ENCODE measurements at regions of chr2 and their contacts with region 1.

Region 1: GRCh38 chr2:196076778-196077568 is 8.3 kb upstream of the DNAH7 start:
- DNase-seq: no peak
- H3K4me3 ChIP-seq: no peak overlapping the region
- H3K27ac ChIP-seq: peak overlapping the region in 1 of 2 experiments; percentile 64; a peak in 1 of 4 replicates
- H3K4me1 ChIP-seq: no peaks in the 10 kb centered on the region
- H3K27me3 ChIP-seq: no peaks in the 10 kb centered on the region
- CTCF ChIP-seq: no peak
- EP300 ChIP-seq: no peak
- RAD21 ChIP-seq: no peak

Region 2: DNA sequence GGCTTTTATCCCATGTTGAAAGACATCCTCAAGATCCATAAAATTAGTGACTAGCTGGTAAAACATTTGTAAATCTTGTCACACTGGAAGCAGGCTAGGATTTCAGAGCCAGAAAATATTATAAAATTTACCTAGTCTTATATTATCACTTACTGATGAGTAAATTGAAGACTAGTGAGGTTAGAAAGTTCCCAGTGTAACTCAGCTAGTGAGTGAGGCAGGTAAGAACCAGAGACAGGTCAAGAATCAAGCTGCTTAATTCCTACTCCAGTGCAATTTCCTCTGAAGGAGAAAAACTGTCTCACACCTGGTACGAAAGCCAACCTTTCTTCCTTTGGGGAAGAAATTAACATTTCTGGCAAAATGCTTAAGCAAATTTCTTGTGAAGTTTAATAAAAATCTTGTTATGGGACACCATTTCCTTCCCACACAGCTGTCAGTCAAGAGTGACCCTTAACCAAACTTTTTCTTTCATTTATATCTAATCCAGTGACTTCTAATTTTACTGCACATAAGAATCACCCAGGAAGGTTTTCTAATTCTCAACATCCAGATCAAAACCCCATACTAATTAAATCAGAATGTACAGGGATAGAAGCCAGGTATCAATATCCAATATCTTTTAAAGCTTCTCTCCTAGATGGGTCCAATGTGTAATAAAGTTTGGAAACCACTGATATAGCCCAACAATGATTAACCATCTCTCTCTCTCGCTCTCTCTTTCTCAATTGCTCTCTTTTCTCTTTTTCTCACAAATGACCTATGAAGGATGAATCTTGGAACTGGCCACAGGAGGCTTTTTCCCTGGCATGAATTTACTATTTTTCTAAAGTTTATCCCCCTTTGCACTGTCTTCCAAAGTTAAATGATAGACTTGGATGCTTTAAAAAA is 684.3 kb before region 1 on chr2:
- CTCF ChIA-PET with region 1: no interaction called
- POLR2A ChIA-PET with region 1: no interaction called
- DNase-seq: no peak
- H3K4me3 ChIP-seq: no peak overlapping the region
- H3K27ac ChIP-seq: no peak overlapping the region; a peak in 1 of 4 replicates
- H3K4me1 ChIP-seq: no peaks in the 10 kb centered on the region; a peak in 1 of 4 replicates
- H3K27me3 ChIP-seq: no peaks in the 10 kb centered on the region
- CTCF ChIP-seq: no peak
- EP300 ChIP-seq: no peak
- RAD21 ChIP-seq: no peak

Region 3: DNA sequence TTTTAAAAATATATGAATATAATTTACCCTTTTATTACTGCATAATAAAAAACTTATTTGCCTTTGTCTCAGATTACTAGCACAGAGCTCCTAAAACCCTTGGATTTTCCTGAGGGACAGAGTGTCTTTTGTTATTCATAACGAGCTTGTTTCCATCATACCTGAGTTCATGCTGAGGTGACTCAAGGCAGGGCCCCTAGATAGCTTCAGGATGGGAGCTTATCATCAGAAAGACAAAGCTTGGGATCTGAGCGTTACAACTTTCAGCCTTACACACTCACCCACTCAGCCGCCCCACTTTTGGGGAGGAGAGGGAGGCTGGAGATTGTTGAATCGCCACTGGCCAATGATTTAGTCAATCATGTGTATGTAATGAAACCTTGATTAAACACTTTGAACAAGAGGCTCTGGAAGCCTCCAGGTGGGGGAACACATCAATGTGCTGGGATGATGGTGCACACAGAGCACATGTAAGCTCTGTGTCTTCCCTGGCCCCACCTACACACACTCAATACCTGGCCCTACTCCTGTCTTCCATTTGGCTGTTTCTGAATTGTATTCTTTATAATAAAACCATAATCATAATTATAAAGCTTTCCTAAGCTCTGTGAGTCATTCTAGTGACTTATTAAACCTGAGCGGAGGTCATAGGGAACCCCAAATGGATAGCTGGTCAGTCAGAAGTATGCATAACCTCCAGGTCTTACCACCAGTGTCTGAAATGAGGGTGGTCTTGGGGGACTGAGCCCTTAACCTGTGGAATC is 20.2 kb after region 1 on chr2:
- CTCF ChIA-PET with region 1: interaction called, 17 read pairs
- POLR2A ChIA-PET with region 1: no interaction called
- DNase-seq: no peak
- H3K4me3 ChIP-seq: no peak overlapping the region
- H3K27ac ChIP-seq: no peak overlapping the region
- H3K4me1 ChIP-seq: no peaks in the 10 kb centered on the region; a peak in 1 of 4 replicates
- H3K27me3 ChIP-seq: no peaks in the 10 kb centered on the region
- CTCF ChIP-seq: no peak
- EP300 ChIP-seq: no peak
- RAD21 ChIP-seq: no peak

Region 4: DNA sequence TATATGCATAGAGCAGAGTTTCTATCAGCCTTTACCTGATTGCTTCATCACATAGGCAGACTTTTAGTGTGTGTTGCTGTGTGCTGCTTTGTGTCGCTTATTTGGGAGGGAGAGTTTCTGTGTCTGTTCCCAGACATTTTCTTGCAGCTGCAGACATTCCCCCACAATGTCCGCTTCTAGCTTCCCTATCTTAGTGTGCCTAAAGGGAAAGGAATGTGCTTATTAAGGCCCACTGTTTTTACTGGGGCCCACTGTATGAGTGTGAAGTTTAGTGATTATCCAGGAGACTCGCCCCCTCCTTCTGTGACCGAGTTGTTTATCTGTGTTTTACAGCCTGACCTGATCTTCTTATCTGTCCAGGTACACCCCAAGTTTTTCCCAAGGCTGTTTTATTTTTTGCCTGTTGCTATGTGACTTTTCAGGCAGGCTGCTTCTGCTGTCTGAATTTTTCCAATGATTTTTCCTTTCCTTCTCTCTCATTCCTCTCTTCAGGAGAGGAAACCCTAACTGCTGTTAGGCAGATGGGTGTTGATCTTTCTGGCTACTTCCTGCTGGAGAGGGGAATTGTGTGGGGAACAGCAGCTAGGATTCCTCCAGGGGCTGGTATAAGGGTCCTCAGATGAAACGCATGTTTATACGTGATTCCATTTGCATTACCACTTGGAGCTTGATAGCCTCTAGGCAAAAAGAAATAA is 46.9 kb after region 1 on chr2:
- CTCF ChIA-PET with region 1: interaction called, 12 read pairs
- POLR2A ChIA-PET with region 1: no interaction called
- DNase-seq: no peak
- H3K4me3 ChIP-seq: no peak overlapping the region
- H3K27ac ChIP-seq: peak overlapping the region in 1 of 2 experiments; percentile 50; a peak in 2 of 4 replicates
- H3K4me1 ChIP-seq: no peaks in the 10 kb centered on the region
- H3K27me3 ChIP-seq: no peaks in the 10 kb centered on the region
- CTCF ChIP-seq: no peak
- EP300 ChIP-seq: no peak
- RAD21 ChIP-seq: no peak

Region 5: DNA sequence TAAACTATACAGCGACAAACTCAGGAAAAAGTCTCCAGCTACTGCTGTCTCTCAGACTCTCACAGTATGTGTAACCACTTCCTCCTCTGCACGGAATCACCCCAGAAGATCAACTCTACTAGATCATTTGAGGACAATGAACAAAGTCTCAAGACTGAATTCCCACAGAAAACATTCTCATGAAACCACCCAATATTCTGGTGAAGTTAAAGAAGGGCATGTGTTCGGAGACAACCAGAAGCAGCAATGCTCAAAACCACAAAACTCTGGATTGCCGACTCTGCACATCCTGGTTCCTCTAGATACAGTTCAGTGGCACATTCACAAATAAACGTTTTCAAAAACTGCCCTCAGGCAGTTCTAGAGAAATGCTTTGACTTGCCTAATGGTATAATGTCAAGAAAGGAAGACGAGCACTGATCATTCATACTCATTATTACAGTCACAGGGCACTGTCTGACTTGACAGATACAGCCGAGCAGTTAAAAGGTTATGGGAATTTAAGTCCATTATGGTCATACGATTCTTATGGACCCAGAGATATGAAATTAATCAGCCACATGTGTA is 186.3 kb after region 1 on chr2:
- CTCF ChIA-PET with region 1: interaction called, 15 read pairs
- POLR2A ChIA-PET with region 1: no interaction called
- DNase-seq: no peak
- H3K4me3 ChIP-seq: no peak overlapping the region
- H3K27ac ChIP-seq: peak overlapping the region; percentile 60 to 99
- H3K4me1 ChIP-seq: peaks cover 19 to 58% of the 10 kb centered on the region in 2 experiments
- H3K27me3 ChIP-seq: no peaks in the 10 kb centered on the region
- CTCF ChIP-seq: no peak
- EP300 ChIP-seq: 0 out of 4 replicates have a peak, but pooled peaks of 1 of the 2 experiments have one; percentile 4
- RAD21 ChIP-seq: no peak

Region 6: DNA sequence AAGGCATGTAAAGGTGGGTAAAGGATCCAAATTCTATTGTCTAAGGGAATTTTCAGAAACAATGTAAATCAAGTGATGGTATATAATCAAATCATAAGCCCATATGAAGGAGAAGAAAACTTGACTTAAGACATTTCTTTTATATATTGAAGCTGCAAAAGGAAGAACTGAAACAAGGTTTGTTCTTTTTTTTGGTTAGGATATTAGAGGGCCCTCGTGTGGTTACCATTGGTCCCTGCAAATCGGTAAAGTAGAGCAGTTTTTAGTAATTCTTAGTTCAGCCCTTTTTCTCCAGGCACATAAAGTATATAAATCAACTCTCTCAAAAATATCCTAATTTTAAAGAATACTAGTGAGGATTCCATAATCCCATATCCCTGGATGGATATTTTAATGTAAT is 200.0 kb after region 1 on chr2:
- CTCF ChIA-PET with region 1: interaction called, 21 read pairs
- POLR2A ChIA-PET with region 1: no interaction called
- DNase-seq: no peak
- H3K4me3 ChIP-seq: peak overlapping the region; percentile 22 to 51; a peak in 2 of 4 replicates
- H3K27ac ChIP-seq: peak overlapping the region in 1 of 2 experiments; percentile 98; a peak in 3 of 4 replicates
- H3K4me1 ChIP-seq: peaks cover 5 to 25% of the 10 kb centered on the region in 2 experiments; a peak in 3 of 4 replicates
- H3K27me3 ChIP-seq: no peaks in the 10 kb centered on the region
- CTCF ChIP-seq: peak; percentile 82
- EP300 ChIP-seq: no peak
- RAD21 ChIP-seq: peak; percentile 57

Region 7: GRCh38 chr2:196291873-196292800 is 215.2 kb after region 1 on chr2:
- CTCF ChIA-PET with region 1: interaction called, 14 read pairs
- POLR2A ChIA-PET with region 1: no interaction called
- DNase-seq: no peak
- H3K4me3 ChIP-seq: no peak overlapping the region
- H3K27ac ChIP-seq: no peak overlapping the region
- H3K4me1 ChIP-seq: peaks cover 8 to 14% of the 10 kb centered on the region in 2 experiments
- H3K27me3 ChIP-seq: no peaks in the 10 kb centered on the region
- CTCF ChIP-seq: no peak
- EP300 ChIP-seq: no peak
- RAD21 ChIP-seq: no peak

Region 8: GRCh38 chr2:196337208-196337953 is 260.4 kb after region 1 on chr2:
- CTCF ChIA-PET with region 1: interaction called, 81 read pairs
- POLR2A ChIA-PET with region 1: no interaction called
- DNase-seq: peak; percentile 54
- H3K4me3 ChIP-seq: no peak overlapping the region
- H3K27ac ChIP-seq: no peak overlapping the region
- H3K4me1 ChIP-seq: peaks cover 0 to 11% of the 10 kb centered on the region in 2 experiments; a peak in 2 of 4 replicates
- H3K27me3 ChIP-seq: no peaks in the 10 kb centered on the region
- CTCF ChIP-seq: peak; percentile 55
- EP300 ChIP-seq: no peak
- RAD21 ChIP-seq: peak; percentile 72